Activated CD4-positive, alpha-beta T cell treated with anti-CD3 and anti-CD28 coated beads, Interleukin-2, amount 10 ng/mL, durations not matched to agents 24 days and 14 days (primary cell): ENCODE measurements at regions of chr1 and their contacts with region 1.

Region 1: DNA sequence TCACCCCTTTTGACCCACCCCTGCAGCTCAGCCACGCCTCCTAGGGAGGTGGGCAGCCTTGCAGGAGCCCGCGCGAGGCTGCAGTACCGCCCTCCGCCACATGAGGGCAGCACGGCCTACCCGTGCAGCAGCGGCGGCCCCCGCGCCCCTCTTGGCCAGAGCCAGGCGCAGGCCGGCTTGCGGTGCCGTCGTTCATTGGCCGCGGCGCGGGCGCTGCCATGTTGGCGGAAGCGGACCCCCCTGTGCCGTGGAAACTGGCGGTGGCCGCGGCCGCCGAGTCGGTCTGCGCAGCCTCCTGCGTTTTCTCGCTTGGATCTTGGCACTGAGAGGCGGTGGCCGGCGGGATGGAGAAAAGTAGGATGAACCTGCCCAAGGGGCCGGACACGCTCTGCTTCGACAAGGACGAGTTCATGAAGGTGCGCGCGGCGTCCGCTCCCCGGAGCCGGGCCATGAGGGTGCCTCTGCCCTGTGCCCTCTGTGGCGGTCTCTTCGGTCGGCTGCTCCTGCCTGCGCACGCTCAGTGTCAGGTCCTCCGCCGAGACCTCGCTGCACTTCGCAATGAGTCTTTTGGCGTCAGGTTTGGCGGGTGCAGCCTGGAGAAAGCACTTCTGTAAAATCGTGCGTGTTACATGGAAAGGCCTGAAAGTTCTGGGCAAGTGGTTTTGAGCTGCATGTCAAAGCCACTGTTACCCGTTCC is at the start of gene COG2:
- DNase-seq: peak; percentile 99
- H3K4me3 Mint-ChIP-seq: peak within 1 kb of the TSS; percentile 96
- H3K27ac Mint-ChIP-seq: peak within 1 kb of the TSS; percentile 98
- H3K4me1 Mint-ChIP-seq: peaks cover 35% of the 10 kb centered on the region
- H3K27me3 Mint-ChIP-seq: peaks cover 18% of the 10 kb centered on the region
- total RNA-seq, gene COG2: 44.1 and 47.4 TPM in 2 replicates

Region 2: GRCh38 chr1:229625915-229626831 is 1016.2 kb before region 1 on chr1 and contains the starts of genes TAF5L and URB2:
- intact Hi-C with region 1: loop called (anchors 5 kb)
- DNase-seq: peak; percentile 97
- H3K4me3 Mint-ChIP-seq: peak within 1 kb of the TSS; percentile 99
- H3K27ac Mint-ChIP-seq: peak within 1 kb of the TSS; percentile 96
- H3K4me1 Mint-ChIP-seq: peaks cover 49% of the 10 kb centered on the region
- H3K27me3 Mint-ChIP-seq: no peaks in the 10 kb centered on the region
- total RNA-seq, gene TAF5L: 29.7 and 30.7 TPM in 2 replicates
- total RNA-seq, gene URB2: 35.8 and 37.1 TPM in 2 replicates

Region 3: DNA sequence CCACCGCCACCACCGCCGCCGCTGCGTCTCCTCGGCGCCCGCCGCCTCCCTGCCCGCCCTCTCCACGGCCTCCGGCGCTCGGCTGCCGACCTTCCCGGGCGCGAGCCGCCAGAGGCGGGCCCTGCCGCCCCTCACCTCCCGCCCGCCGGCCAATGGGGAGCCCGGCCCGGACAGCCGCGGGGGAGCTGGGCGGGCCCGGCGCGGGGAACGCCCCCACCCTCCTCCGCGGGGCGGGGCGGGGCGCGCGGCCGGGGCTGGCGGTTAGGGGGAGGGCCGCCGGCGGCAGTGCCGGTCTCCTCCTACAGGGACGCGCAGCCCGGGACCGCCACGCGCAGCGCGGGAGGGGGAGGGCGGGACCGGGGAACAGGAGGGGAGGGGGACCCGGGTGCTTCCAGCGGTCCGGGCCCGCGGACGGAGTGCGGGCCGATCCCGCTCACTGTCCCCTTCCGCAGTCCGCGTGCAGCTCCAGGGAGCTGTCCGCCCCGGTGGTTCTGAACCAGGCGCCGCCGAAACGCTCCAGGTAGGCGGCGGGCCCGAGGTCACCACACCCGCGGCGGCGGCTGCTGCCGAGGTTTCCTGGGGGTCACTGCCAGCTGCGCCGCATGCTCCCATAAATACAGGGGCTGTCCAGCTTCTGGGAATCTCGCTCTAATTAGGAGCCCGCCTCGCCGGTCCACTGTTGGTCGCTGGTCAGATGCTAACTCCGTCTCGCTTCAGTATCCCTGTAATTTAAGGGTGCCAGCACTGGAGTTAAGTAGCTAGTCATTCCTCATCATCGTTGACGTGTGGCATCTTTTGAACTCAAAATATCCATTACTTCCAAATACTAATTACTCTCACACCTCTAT is 215.9 kb before region 1 on chr1 and contains the start of gene PGBD5:
- intact Hi-C with region 1: loop called (anchors 2 kb)
- DNase-seq: peak; percentile 92
- H3K4me3 Mint-ChIP-seq: peak within 1 kb of the TSS; percentile 79
- H3K27ac Mint-ChIP-seq: peak within 1 kb of the TSS; percentile 39
- H3K4me1 Mint-ChIP-seq: peaks cover 13% of the 10 kb centered on the region
- H3K27me3 Mint-ChIP-seq: peaks cover 61% of the 10 kb centered on the region
- total RNA-seq, gene PGBD5: 0.09 TPM in 1 of 2 replicates, not detected in the other

Region 4: GRCh38 chr1:230867903-230868735 is 225.7 kb after region 1 on chr1 and contains the start of gene C1orf198:
- intact Hi-C with region 1: loop called (anchors 2 kb)
- DNase-seq: peak; percentile 91
- H3K4me3 Mint-ChIP-seq: peak within 1 kb of the TSS; percentile 89
- H3K27ac Mint-ChIP-seq: peak within 1 kb of the TSS; percentile 84
- H3K4me1 Mint-ChIP-seq: peaks cover 31% of the 10 kb centered on the region
- H3K27me3 Mint-ChIP-seq: peaks cover 35% of the 10 kb centered on the region
- total RNA-seq, gene C1orf198: 12.4 and 13.7 TPM in 2 replicates

Region 5: DNA sequence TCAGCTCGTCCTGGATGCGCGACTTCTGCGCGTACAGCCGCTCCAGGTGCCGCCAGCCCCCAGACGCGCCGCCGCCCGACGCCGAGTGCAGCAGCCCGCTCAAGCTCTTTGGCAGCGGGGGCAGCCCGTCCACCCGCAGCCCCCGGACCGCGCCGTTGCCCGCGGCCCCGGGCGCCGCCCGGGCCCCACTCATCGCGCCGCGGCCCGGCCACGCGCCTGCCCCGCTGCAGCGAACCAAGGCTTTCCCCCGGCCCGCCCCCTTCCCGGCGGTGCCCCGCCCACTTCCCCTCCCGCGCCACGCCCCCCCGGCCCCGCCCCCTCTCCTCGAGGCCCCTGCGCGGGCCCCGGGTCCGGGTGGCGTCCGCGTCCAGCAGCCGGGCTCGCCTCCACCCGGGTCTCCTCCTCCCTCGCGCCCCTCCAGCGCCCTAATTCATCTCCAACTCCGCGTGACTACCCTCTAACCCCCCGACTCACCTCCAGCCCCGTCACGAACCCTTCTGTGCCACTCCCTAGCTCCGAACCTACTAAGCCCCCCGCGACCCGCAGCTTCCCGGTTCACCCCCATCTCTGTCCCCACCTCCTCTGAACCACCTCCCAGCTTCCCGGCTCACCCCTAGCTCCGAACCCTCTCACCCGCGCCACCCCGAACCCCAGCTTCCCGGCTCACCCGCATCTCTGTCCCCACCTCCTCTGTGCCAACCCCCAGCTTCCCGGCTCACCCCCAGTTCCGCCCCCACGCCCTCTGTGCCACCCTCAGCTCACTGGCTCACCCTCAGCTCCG is 397.8 kb after region 1 on chr1 and contains the start of gene FAM89A:
- intact Hi-C with region 1: loop called (anchors 10 kb)
- DNase-seq: peak; percentile 90
- H3K4me3 Mint-ChIP-seq: peak within 1 kb of the TSS; percentile 85
- H3K27ac Mint-ChIP-seq: peak within 1 kb of the TSS; percentile 61
- H3K4me1 Mint-ChIP-seq: peaks cover 28% of the 10 kb centered on the region
- H3K27me3 Mint-ChIP-seq: peaks cover 30% of the 10 kb centered on the region
- total RNA-seq, gene FAM89A: 20.2 and 20.3 TPM in 2 replicates

Region 6: DNA sequence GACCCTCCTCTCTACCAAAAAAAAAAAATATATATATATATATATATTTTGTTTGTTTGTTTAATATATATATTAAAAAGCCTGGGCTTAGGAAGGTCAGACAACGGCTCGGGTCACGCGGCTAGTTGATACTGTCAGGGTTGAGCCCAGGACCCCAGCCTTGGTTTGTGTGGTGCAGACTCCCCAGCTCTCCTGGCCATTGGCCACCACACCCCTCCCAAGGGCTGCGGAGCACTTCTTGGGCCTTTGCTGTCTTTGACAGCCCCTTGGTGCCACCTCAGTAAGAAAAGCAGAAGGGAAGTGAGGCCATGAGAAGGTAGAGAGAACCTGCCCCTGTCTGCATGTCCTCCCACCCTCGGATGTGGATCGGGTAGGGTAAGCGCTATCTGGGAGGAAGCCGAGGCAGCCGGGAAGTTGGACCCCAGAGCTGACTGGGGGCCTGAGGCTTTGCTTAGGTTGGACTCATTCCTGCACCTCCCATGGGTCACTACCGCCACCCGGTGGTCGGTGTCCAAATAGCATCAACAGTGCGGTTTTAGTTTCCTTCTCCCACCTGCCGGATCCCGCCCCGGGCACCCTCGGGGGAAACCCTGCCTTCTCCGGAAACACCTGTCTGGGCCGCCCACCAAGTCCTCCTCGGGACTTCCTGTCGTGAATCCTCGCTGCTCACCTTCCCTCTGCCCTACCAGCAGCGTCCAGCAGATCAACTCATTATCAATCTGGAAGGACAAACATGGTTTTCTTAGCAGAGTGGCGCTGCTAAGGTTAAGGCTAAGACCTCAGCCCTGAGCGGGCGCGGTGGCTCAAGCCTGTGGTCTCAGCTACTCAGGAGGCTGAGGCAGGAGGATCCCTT is 568.8 kb after region 1 on chr1:
- intact Hi-C with region 1: loop called (anchors 5 kb)
- DNase-seq: peak; percentile 97
- H3K4me3 Mint-ChIP-seq: peak overlapping the region; percentile 91
- H3K27ac Mint-ChIP-seq: peak overlapping the region; percentile 82
- H3K4me1 Mint-ChIP-seq: peaks cover 13% of the 10 kb centered on the region
- H3K27me3 Mint-ChIP-seq: peaks cover 7% of the 10 kb centered on the region

Region 7: GRCh38 chr1:231337472-231338269 is 695.3 kb after region 1 on chr1 and contains the start of gene EXOC8:
- intact Hi-C with region 1: loop called (anchors 2 kb)
- DNase-seq: peak; percentile 100
- H3K4me3 Mint-ChIP-seq: peak within 1 kb of the TSS; percentile 95
- H3K27ac Mint-ChIP-seq: peak within 1 kb of the TSS; percentile 98
- H3K4me1 Mint-ChIP-seq: peaks cover 44% of the 10 kb centered on the region
- H3K27me3 Mint-ChIP-seq: peaks cover 3% of the 10 kb centered on the region
- total RNA-seq, gene EXOC8: 12.4 and 13.3 TPM in 2 replicates

Region 8: DNA sequence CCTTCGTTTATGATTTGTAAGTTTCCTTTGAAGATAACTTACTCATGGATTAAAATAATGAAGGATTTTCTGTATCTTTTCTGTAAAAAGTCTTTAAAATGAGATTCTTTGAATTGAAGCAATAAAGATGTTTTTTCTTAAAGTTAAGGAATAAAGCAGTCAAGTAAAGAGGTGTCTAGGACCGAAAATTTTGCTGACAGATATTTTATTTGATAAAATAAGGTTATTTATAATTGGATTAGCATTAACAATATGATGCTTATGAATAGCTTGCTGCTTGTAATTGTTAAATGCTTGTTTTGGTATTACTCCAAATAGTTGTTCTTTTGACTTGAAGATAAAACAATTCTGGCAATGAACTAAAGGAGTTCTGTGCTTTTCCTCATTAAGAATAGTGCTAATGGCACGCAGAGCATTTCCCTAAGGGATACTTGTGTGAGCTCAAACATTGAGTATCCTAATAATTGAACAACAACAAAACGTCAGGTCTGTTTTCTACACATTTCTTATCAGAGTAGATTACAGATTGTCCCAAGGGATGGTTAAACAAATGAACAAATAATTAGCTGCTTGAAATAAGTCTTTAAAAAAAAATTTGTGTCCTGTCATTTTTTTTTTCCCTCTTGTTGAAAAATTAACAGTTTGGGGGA is 902.7 kb after region 1 on chr1:
- intact Hi-C with region 1: no loop called
- DNase-seq: no peak
- H3K4me3 Mint-ChIP-seq: no peak overlapping the region
- H3K27ac Mint-ChIP-seq: no peak overlapping the region
- H3K4me1 Mint-ChIP-seq: peaks cover 3% of the 10 kb centered on the region
- H3K27me3 Mint-ChIP-seq: no peaks in the 10 kb centered on the region